ENCODE measurements at regions of chr3 and their contacts with region 1.

Region 1: DNA sequence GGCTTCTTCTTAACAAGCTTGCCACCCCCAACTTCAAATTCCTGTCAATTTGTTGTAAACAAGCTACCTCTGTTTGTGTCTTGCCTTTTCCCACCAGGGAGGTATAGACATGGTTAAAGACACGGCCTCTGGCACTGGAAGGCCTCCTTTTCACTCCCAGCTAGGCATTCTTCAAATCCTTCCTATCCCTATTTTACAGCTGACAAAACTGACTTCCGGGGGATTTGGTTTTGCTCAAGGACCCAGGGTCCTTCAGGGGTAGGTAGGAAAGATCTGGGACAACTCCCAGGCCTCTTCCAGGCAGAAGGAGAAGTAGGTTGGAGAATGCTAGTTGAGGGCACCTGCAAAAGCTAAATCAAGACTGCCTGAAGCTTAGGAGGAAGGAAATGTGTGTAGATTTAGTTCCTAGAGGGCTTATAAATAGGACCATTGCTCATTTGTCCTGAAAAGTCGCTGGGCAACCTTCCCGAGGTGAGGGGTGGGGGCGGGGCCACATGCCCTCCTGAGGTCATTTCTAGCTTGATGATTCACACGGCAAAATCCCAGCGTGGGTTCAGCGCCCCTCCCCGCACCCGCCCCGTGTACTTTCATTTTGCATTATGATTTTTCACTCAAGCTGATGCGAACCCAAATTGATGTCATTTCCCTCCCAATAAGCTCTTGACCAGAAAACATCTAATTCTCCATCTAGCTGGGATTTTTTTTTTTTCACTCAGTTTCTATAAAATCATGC is 365.5 kb downstream of the SHQ1 start:
- DNase-seq: peak; percentile 94
- ATAC-seq: peak; percentile 46
- H3K4me3 Mint-ChIP-seq: peak overlapping the region; percentile 51
- H3K27ac Mint-ChIP-seq: peak overlapping the region; percentile 90
- H3K4me1 Mint-ChIP-seq: peaks cover 73% of the 10 kb centered on the region
- H3K27me3 Mint-ChIP-seq: no peaks in the 10 kb centered on the region

Region 2: GRCh38 chr3:71090207-71090606 is 1392.5 kb before region 1 on chr3:
- CTCF ChIA-PET with region 1: no interaction called
- POLR2A ChIA-PET with region 1: no interaction called
- intact Hi-C with region 1: no loop called
- DNase-seq: no peak
- ATAC-seq: no peak
- H3K4me3 Mint-ChIP-seq: no peak overlapping the region
- H3K27ac Mint-ChIP-seq: peak overlapping the region; percentile 78
- H3K4me1 Mint-ChIP-seq: peaks cover 89% of the 10 kb centered on the region
- H3K27me3 Mint-ChIP-seq: no peaks in the 10 kb centered on the region

Region 3: GRCh38 chr3:71753630-71754483 is 728.9 kb before region 1 on chr3 and contains the start of gene GPR27:
- CTCF ChIA-PET with region 1: no interaction called
- POLR2A ChIA-PET with region 1: no interaction called
- intact Hi-C with region 1: no loop called
- DNase-seq: peak; percentile 45
- ATAC-seq: peak; percentile 72
- H3K4me3 Mint-ChIP-seq: peak within 1 kb of the TSS; percentile 53
- H3K27ac Mint-ChIP-seq: no peak within 1 kb of the TSS
- H3K4me1 Mint-ChIP-seq: peaks cover 5% of the 10 kb centered on the region
- H3K27me3 Mint-ChIP-seq: peaks cover 31% of the 10 kb centered on the region
- total RNA-seq, gene GPR27: 1.2 to 1.6 TPM

Region 4: GRCh38 chr3:71998995-71999673 is 483.6 kb before region 1 on chr3:
- CTCF ChIA-PET with region 1: no interaction called
- POLR2A ChIA-PET with region 1: no interaction called
- intact Hi-C with region 1: loop called in 1 of 2 experiments (anchors 5 kb)
- DNase-seq: peak; percentile 47
- ATAC-seq: peak; percentile 90
- H3K4me3 Mint-ChIP-seq: no peak overlapping the region
- H3K27ac Mint-ChIP-seq: peak overlapping the region; percentile 77
- H3K4me1 Mint-ChIP-seq: peaks cover 34% of the 10 kb centered on the region
- H3K27me3 Mint-ChIP-seq: peaks cover 5% of the 10 kb centered on the region

Region 5: GRCh38 chr3:72405943-72406566 is 76.7 kb before region 1 on chr3:
- CTCF ChIA-PET with region 1: no interaction called
- POLR2A ChIA-PET with region 1: no interaction called
- intact Hi-C with region 1: no loop called
- DNase-seq: no peak
- ATAC-seq: no peak
- H3K4me3 Mint-ChIP-seq: no peak overlapping the region
- H3K27ac Mint-ChIP-seq: no peak overlapping the region
- H3K4me1 Mint-ChIP-seq: peaks cover 85% of the 10 kb centered on the region
- H3K27me3 Mint-ChIP-seq: no peaks in the 10 kb centered on the region

Region 6: DNA sequence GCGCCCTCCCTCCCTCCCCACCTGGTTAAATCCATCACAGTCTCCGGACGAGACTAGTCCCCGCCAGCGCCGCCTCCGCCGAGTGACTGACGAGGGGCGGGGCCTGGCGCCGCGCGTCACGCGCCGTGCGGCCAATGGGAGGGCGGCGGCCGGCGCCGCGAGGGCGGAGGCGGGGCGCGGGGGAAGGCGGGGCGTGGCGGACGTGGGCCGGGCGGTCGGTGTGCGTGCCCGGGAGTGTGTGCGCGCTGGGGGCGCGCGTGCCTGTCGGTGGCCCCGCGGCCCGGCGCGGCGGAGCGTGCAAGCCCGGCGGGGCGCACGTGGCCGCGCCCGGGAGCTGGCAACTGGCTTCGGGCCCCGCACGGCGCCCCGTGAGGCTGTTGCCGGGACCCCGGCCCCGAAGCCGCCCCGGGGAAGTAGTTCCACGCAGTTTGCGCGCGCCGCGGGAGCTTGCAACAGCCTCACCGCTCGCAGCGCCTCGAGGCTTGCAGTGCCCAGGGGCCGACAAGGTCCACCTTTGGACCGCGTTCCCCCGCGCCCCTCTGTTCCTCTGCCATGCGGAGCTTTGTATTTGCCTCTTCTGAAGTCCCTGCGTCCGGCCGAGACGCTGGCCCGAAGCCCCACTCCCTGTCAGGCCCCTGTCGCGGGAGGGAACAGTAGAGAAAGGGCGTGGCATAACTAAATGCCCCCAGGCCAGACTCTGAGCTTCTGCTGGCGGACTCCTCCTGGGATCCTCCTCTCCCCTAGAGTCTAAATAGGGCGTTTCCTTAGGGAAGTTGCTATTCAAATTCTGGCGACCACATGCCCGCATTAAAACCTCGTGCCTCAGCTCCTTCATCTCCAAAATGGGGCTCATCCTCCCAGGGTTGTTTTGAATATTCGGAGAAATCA is 35.5 kb before region 1 on chr3:
- CTCF ChIA-PET with region 1: interaction called, 3 read pairs
- POLR2A ChIA-PET with region 1: interaction called, 4 read pairs
- intact Hi-C with region 1: loop called (anchors 1 kb)
- DNase-seq: peak; percentile 96
- ATAC-seq: peak; percentile 87
- H3K4me3 Mint-ChIP-seq: peak overlapping the region; percentile 43
- H3K27ac Mint-ChIP-seq: peak overlapping the region; percentile 63
- H3K4me1 Mint-ChIP-seq: peaks cover 38% of the 10 kb centered on the region
- H3K27me3 Mint-ChIP-seq: peaks cover 13% of the 10 kb centered on the region

Region 7: DNA sequence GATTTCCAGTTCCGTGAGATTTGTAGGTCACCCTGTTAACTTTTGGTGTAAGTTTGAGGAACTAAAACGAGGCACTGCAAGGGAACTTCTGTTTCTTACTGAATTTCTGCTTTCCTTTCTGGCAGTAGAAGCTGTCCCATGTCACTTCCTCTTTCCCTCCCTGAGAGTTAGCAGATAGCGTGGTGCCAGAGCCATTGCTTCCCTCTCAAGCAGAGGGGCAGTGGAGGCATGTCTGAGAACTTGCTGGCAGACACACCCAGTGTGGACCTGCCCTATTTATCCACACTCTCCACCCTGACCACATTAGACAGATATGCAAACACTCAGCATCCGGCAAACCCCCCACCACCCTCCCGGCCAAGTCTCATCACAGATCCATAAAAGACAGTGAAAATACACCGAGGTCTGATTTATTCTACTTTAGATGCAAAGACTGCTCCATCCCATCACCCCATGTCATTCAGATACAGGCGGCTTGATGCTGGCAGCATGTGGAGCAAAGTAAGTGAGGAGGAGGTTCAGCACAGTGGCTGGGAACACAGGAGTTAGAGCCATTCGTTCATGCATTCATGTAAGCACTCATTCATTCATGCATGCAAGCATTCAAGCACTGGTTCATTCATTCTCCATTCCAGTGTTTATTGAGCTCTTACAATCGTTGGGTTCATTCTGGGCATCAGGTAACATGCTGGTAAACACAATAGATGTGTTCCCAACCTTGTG is 40.8 kb after region 1 on chr3:
- CTCF ChIA-PET with region 1: interaction called, 10 read pairs
- POLR2A ChIA-PET with region 1: interaction called, 3 read pairs
- intact Hi-C with region 1: loop called (anchors 1 kb)
- DNase-seq: no peak
- ATAC-seq: no peak
- H3K4me3 Mint-ChIP-seq: no peak overlapping the region
- H3K27ac Mint-ChIP-seq: peak overlapping the region; percentile 55
- H3K4me1 Mint-ChIP-seq: peaks cover 45% of the 10 kb centered on the region
- H3K27me3 Mint-ChIP-seq: no peaks in the 10 kb centered on the region

Measured in activated CD4-positive, alpha-beta T cell treated with anti-CD3 and anti-CD28 coated beads for 36 hours (primary cell).